MCF 10A (cell line): ENCODE measurements at regions of chr14 and their contacts with region 1.

Region 1: GRCh38 chr14:62179367-62180018 is 417.3 kb downstream of the SNAPC1 start:
- DNase-seq: peak; percentile 86
- H3K4me3 Mint-ChIP-seq: no peak overlapping the region
- H3K27ac Mint-ChIP-seq: peak overlapping the region; percentile 39
- H3K4me1 Mint-ChIP-seq: peaks cover 12% of the 10 kb centered on the region
- H3K27me3 Mint-ChIP-seq: no peaks in the 10 kb centered on the region
- CTCF ChIP-seq: peak; percentile 71

Region 2: DNA sequence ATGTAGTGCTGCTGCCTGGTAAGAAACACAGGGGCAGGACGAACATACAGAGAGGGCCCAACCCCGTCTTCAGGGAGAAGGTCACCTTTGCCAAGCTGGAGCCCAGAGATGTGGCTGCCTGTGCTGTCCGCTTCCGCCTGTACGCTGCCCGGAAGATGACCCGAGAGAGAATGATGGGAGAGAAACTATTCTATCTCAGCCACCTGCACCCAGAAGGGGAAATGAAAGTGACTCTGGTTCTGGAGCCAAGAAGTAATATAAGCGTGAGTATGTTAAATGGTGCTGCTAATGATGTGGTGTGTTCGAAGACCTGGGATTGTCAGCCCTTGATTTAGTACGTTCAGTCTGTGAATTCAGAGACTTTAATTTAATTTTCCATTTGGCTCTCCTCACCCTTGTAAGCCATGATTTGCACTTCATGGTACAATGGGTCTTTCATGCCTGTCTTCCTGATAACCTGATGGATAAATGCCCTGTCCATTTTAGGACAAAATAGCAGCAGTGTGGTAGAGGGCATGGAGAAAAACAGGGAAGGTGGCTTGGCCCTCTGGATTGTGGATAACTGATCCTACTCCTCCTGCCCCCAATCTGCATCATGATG is 98.4 kb before region 1 on chr14:
- CTCF ChIA-PET with region 1: no interaction called
- POLR2A ChIA-PET with region 1: no interaction called
- intact Hi-C with region 1: no loop called
- DNase-seq: no peak
- H3K4me3 Mint-ChIP-seq: no peak overlapping the region
- H3K27ac Mint-ChIP-seq: no peak overlapping the region
- H3K4me1 Mint-ChIP-seq: no peaks in the 10 kb centered on the region
- H3K27me3 Mint-ChIP-seq: no peaks in the 10 kb centered on the region
- CTCF ChIP-seq: no peak

Region 3: GRCh38 chr14:62146030-62146429 is 33.5 kb before region 1 on chr14:
- CTCF ChIA-PET with region 1: no interaction called
- POLR2A ChIA-PET with region 1: no interaction called
- intact Hi-C with region 1: no loop called
- DNase-seq: no peak
- H3K4me3 Mint-ChIP-seq: no peak overlapping the region
- H3K27ac Mint-ChIP-seq: no peak overlapping the region
- H3K4me1 Mint-ChIP-seq: peaks cover 10% of the 10 kb centered on the region
- H3K27me3 Mint-ChIP-seq: no peaks in the 10 kb centered on the region
- CTCF ChIP-seq: no peak

Region 4: DNA sequence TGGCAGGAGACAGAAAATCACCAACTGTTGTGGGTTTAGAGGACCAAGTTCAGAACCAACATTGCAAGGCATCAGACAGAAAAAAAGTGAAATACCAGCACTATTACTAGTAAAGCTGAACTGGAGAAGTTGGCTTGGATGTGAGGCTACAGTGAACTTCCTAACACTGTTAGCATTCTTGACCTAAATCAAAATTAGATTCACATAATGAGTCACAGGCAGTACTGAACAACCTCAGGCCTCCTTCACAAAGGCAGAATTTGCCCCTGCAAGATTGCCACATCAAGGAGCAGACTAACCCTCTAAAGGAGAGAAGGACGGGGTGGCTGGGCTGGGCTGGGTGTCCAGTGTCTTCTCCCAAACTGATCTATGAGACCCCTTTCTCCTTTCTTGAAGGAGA is 122.4 kb after region 1 on chr14:
- CTCF ChIA-PET with region 1: no interaction called
- POLR2A ChIA-PET with region 1: no interaction called
- intact Hi-C with region 1: no loop called
- DNase-seq: peak; percentile 51
- H3K4me3 Mint-ChIP-seq: no peak overlapping the region
- H3K27ac Mint-ChIP-seq: no peak overlapping the region
- H3K4me1 Mint-ChIP-seq: peaks cover 25% of the 10 kb centered on the region
- H3K27me3 Mint-ChIP-seq: no peaks in the 10 kb centered on the region
- CTCF ChIP-seq: no peak

Region 5: DNA sequence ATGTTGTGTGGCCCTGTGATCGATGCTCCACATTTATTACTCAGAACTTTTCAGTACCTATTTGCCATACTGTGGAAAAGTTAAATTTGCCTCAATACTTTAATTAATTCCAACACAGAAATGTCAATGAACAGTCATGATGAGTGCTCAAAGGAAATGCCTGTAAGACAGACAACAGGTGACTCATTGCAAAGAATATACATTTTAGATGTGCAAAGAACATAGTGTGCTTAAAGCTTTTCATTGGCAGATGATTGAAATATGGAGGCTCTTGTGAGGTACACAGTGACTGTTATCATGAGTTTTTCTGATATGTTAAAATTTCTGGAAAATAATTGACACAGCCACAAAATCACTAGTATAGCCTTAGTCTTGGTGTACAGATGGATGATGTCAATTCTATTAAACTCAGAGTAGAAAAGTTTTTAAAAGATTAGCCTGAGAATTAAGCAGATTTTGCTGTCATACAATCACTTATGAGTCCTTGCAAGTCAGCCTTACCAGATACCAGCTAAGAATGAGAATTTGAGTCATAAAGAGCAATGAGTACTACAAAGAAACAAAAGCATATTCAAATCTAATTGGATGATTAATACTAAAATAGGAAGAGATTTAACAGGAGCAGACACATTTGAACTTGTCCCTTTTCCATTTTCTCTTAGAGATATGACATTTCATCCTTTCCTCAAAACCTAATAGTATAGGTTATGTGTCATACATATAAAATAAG is 321.7 kb after region 1 on chr14:
- CTCF ChIA-PET with region 1: no interaction called
- POLR2A ChIA-PET with region 1: no interaction called
- intact Hi-C with region 1: no loop called
- DNase-seq: no peak
- H3K4me3 Mint-ChIP-seq: no peak overlapping the region
- H3K27ac Mint-ChIP-seq: no peak overlapping the region
- H3K4me1 Mint-ChIP-seq: peaks cover 13% of the 10 kb centered on the region
- H3K27me3 Mint-ChIP-seq: no peaks in the 10 kb centered on the region
- CTCF ChIP-seq: no peak

Region 6: GRCh38 chr14:62691613-62692487 is 512.4 kb after region 1 on chr14:
- CTCF ChIA-PET with region 1: no interaction called
- POLR2A ChIA-PET with region 1: no interaction called
- intact Hi-C with region 1: loop called (anchors 5 kb)
- DNase-seq: peak; percentile 97
- H3K4me3 Mint-ChIP-seq: peak overlapping the region; percentile 38
- H3K27ac Mint-ChIP-seq: peak overlapping the region; percentile 97
- H3K4me1 Mint-ChIP-seq: peaks cover 33% of the 10 kb centered on the region
- H3K27me3 Mint-ChIP-seq: no peaks in the 10 kb centered on the region
- CTCF ChIP-seq: no peak

Region 7: GRCh38 chr14:62905566-62905965 is 726.1 kb after region 1 on chr14:
- CTCF ChIA-PET with region 1: no interaction called
- POLR2A ChIA-PET with region 1: no interaction called
- intact Hi-C with region 1: loop called (anchors 10 kb)
- DNase-seq: no peak
- H3K4me3 Mint-ChIP-seq: no peak overlapping the region
- H3K27ac Mint-ChIP-seq: no peak overlapping the region
- H3K4me1 Mint-ChIP-seq: no peaks in the 10 kb centered on the region
- H3K27me3 Mint-ChIP-seq: no peaks in the 10 kb centered on the region
- CTCF ChIP-seq: no peak

Region 8: GRCh38 chr14:63039800-63040380 is 860.4 kb after region 1 on chr14:
- CTCF ChIA-PET with region 1: interaction called, 48 read pairs
- POLR2A ChIA-PET with region 1: interaction called, 16 read pairs
- intact Hi-C with region 1: loop called (anchors 1 kb)
- DNase-seq: peak; percentile 55
- H3K4me3 Mint-ChIP-seq: no peak overlapping the region
- H3K27ac Mint-ChIP-seq: no peak overlapping the region
- H3K4me1 Mint-ChIP-seq: no peaks in the 10 kb centered on the region
- H3K27me3 Mint-ChIP-seq: no peaks in the 10 kb centered on the region
- CTCF ChIP-seq: peak; percentile 75

Region 9: DNA sequence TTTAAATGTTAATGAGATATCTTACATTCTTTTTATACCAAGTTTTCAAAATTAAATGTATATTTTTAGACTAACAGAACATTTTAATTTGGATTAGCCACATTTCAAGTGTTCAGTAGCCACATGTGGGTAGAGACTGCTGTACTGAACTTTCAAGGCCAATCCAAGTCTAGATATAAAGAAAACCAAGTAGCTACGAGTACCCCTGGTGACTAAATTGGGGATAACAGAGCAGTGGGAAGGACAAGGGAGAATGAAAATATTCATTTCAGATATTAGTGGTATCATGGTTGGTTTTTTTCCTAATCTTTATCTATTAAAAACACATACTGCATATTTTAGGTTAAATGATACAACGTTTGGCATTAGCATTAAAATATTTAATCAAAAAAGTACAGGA is 955.3 kb after region 1 on chr14:
- CTCF ChIA-PET with region 1: interaction called, 4 read pairs
- POLR2A ChIA-PET with region 1: no interaction called
- intact Hi-C with region 1: loop called (anchors 1 kb)
- DNase-seq: peak; percentile 40
- H3K4me3 Mint-ChIP-seq: no peak overlapping the region
- H3K27ac Mint-ChIP-seq: no peak overlapping the region
- H3K4me1 Mint-ChIP-seq: no peaks in the 10 kb centered on the region
- H3K27me3 Mint-ChIP-seq: no peaks in the 10 kb centered on the region
- CTCF ChIP-seq: peak; percentile 17

Region 10: GRCh38 chr14:63174760-63175211 is 995.3 kb after region 1 on chr14:
- CTCF ChIA-PET with region 1: no interaction called
- POLR2A ChIA-PET with region 1: no interaction called
- intact Hi-C with region 1: loop called (anchors 5 kb)
- DNase-seq: peak; percentile 60
- H3K4me3 Mint-ChIP-seq: no peak overlapping the region
- H3K27ac Mint-ChIP-seq: no peak overlapping the region
- H3K4me1 Mint-ChIP-seq: peaks cover 19% of the 10 kb centered on the region
- H3K27me3 Mint-ChIP-seq: no peaks in the 10 kb centered on the region
- CTCF ChIP-seq: peak; percentile 58

Region 11: GRCh38 chr14:63276492-63277342 is 1097.2 kb after region 1 on chr14:
- CTCF ChIA-PET with region 1: interaction called, 56 read pairs
- POLR2A ChIA-PET with region 1: no interaction called
- intact Hi-C with region 1: loop called (anchors 1 kb)
- DNase-seq: peak; percentile 56
- H3K4me3 Mint-ChIP-seq: no peak overlapping the region
- H3K27ac Mint-ChIP-seq: no peak overlapping the region
- H3K4me1 Mint-ChIP-seq: no peaks in the 10 kb centered on the region
- H3K27me3 Mint-ChIP-seq: no peaks in the 10 kb centered on the region
- CTCF ChIP-seq: peak; percentile 77